Heart right ventricle (tissue), 16 donors: ENCODE measurements at regions of chr3 and their contacts with region 1.

Region 1: DNA sequence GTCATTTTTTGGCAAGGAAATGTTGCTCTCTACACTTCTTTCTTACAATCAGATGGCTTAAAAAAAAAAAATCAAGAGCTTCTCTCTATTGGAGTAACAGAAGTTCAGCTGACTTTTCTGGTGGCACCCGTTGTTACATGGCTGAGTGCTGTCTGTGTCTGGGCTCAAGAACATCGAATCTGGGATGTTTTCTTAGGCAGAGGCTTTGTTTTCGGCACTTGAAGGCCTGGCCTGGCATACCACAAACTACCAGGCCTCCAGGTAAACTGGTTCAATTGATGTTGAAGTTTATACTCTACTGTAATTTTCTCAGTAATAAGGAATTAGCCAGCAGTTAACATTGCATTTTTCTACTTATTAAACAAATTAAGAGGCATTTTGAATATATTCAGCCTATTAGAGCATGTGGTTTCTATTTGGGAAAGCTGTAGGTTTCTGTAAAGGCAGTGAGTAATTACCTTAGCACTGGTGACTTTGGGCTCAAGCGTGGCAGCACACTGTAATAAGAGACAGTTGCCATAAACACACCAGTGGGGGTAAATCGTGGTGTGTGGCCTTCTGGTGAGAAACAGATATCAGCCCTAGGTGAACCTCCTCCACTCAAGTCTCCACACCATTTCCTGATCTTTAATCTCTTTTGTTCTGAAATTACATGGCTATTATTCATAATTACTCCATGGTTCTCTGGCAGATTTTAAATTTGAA is 544.7 kb downstream of the MECOM start:
- DNase-seq: no peak
- ATAC-seq: no peak
- H3K4me3 ChIP-seq: no peak overlapping the region
- H3K27ac ChIP-seq: peak overlapping the region in 9 of 10 donors; percentile 6 to 82 (median 59)
- H3K4me1 ChIP-seq: peaks cover 0 to 71% (median 21%) of the 10 kb centered on the region in 9 donors
- H3K27me3 ChIP-seq: no peaks in the 10 kb centered on the region
- CTCF ChIP-seq: no peak

Region 2: DNA sequence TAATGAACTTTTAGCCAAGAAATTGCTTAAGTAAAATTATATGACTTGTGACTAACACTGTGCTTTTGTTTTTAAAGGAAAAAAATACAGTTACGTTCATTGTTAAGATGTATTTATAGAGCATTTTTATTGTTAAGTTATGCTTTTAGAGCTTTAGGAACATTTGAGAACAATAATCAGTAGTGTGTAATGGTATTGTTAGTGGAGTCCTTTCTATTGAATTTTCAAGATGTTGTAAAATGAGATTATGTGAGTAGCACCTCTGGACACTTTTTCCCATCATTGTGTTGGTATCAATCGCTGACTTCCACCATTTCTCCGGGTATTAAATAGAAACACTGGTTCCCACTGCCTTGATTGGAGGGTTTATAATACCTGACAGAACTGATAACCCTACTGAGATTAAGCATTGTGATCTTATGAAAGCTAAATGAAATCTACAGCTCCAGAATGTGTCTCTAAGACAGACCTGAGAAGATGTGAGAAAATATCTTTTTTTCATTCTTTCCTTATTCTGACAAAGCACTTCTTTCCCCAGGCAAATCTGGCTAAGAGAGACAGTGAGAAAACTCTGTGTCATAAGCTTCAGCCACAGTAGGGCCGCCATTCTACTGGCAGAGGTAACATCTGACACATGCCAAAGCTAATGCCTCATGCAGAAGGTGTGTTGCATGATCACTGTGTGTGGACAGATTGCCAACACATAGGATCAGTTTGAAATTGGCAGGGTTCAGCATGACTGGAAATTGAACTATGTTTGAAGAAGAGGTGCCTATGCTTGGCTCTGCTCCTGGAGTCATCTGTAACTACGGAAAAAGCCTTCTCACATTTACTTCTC is 66.1 kb before region 1 on chr3:
- intact Hi-C with region 1: loop called in 1 of 10 experiments (anchors 5 kb)
- DNase-seq: no peak
- ATAC-seq: peak in 3 of 8 donors; percentile 57 to 75 (median 64)
- H3K4me3 ChIP-seq: no peak overlapping the region
- H3K27ac ChIP-seq: peak overlapping the region in 4 of 10 donors; percentile 29 to 49 (median 36)
- H3K4me1 ChIP-seq: no peaks in the 10 kb centered on the region
- H3K27me3 ChIP-seq: no peaks in the 10 kb centered on the region
- CTCF ChIP-seq: no peak